ENCODE measurements at regions of chr19 and their contacts with region 1.

Region 1: DNA sequence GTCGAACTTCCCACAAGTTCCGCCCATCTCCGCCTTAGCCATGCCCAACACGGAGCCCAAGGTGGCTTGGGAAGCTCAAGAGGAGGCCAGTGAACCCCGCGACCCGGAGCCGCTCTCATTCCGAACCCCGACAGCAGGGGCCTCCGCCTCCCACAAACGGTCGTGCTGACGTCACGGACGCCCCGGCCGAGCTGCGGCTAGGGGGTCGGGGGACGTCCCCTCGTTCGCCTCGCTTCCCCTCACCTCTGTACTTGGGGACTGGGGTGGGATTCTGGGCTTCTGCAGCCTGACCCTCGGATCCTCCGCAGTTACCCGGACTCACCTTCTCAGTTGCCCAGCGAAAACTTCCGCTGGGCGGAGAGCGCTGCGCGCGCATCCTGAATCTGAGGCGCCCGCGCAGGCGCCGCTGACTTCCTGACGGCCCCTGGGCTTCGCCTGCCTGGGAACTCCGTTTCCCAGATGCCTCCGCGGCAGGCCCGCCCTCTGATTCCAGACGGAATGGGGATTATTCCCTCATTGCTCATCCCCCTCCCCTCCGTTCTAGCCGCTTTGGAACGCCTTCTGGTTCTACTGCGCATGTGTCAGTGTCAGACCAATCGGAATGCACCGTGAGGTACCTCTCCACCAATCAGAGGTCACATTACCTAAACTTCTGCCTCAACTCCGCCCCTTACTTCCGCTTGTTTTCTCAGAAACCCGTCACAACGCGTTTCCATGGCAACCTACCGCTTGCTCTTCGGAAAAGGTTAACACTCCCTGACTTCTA is at the start of gene VRK3:
- DNase-seq: peak; percentile 96 to 100 (median 99)
- H3K4me3 ChIP-seq: peak within 1 kb of the TSS; percentile 96
- H3K4me3 Mint-ChIP-seq: peak within 1 kb of the TSS; percentile 91 to 98 (median 95)
- H3K27ac ChIP-seq: peak within 1 kb of the TSS; percentile 100
- H3K27ac Mint-ChIP-seq: peak within 1 kb of the TSS; percentile 99 to 100 (median 100)
- H3K4me1 ChIP-seq: peaks cover 30% of the 10 kb centered on the region
- H3K4me1 Mint-ChIP-seq: peaks cover 49 to 64% (median 60%) of the 10 kb centered on the region in 3 donors
- H3K27me3 ChIP-seq: no peaks in the 10 kb centered on the region
- H3K27me3 Mint-ChIP-seq: peaks cover 0 to 5% of the 10 kb centered on the region in 2 donors
- total RNA-seq, gene VRK3: 62.4 to 66.5 TPM

Region 2: DNA sequence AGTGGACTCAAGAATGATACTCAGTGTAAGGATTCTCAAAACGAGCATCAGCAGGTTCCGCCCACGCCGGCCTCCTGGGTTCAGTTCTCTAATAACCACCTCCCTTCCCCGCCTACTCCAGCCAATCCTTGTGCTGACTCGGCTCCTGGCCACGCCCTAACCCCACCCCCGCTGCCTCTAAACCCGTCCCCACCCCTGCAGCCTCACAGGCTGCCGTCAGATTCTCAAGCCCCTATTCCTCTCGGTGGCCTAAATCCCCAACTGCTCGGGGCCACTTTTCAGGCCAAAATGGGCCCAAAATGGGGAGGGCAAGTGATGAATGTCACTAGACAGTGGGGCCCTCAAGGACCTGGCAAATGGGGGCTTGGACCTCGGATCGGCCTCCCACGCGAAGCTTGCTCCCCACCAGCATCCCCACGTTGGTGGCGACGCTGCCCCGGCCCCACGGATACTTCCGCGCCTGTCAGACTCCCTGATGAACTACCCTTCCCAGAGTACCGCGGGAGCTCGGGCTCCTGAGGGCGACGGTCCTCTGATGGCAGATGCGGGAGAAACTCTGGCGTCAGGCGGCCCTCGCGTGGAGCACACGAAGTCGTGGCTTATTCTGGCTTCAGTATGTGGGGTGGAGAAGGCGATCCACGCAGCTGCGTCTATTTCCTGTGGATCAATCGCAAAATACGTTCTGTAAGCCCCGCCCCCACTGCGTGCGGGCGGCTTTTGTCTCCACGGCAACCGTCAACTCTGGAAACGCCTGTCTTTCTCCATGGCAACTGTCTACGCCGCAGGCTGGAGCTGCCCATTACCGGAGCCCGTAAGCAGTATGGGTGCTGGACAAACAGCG is 25.4 kb after region 1 on chr19:
- CTCF ChIA-PET with region 1: interaction called, 3 read pairs
- POLR2A ChIA-PET with region 1: interaction called, 14 read pairs
- DNase-seq: peak; percentile 77 to 90 (median 81)
- H3K4me3 ChIP-seq: peak overlapping the region; percentile 68
- H3K4me3 Mint-ChIP-seq: peak overlapping the region; percentile 84 to 92 (median 91)
- H3K27ac ChIP-seq: peak overlapping the region; percentile 62
- H3K27ac Mint-ChIP-seq: peak overlapping the region; percentile 84 to 98 (median 92)
- H3K4me1 ChIP-seq: peaks cover 12% of the 10 kb centered on the region
- H3K4me1 Mint-ChIP-seq: peaks cover 11 to 19% (median 14%) of the 10 kb centered on the region in 3 donors
- H3K27me3 ChIP-seq: no peaks in the 10 kb centered on the region
- H3K27me3 Mint-ChIP-seq: peaks cover 0 to 3% of the 10 kb centered on the region in 2 donors

Measured in CD8-positive, alpha-beta memory T cell (primary cell).